Caco-2 (cell line): ENCODE measurements at regions of chr13 and their contacts with region 1.

Region 1: GRCh38 chr13:37510441-37510840 is 88.1 kb downstream of the POSTN start:
- DNase-seq: no peak
- H3K4me3 ChIP-seq: no peak overlapping the region
- H3K4me3 Mint-ChIP-seq: no peak overlapping the region
- H3K27ac Mint-ChIP-seq: no peak overlapping the region
- H3K4me1 ChIP-seq: peaks cover 20% of the 10 kb centered on the region
- H3K4me1 Mint-ChIP-seq: peaks cover 12% of the 10 kb centered on the region
- H3K27me3 ChIP-seq: no peaks in the 10 kb centered on the region
- H3K27me3 Mint-ChIP-seq: no peaks in the 10 kb centered on the region
- CTCF ChIP-seq: no peak

Region 2: GRCh38 chr13:37475966-37476365 is 34.5 kb before region 1 on chr13:
- CTCF ChIA-PET with region 1: no interaction called
- POLR2A ChIA-PET with region 1: no interaction called
- intact Hi-C with region 1: loop called (anchors 1 kb)
- DNase-seq: no peak
- H3K4me3 ChIP-seq: no peak overlapping the region
- H3K4me3 Mint-ChIP-seq: no peak overlapping the region
- H3K27ac Mint-ChIP-seq: no peak overlapping the region
- H3K4me1 ChIP-seq: no peaks in the 10 kb centered on the region; the same call in 1 of the 2 replicates
- H3K4me1 Mint-ChIP-seq: peaks cover 14% of the 10 kb centered on the region
- H3K27me3 ChIP-seq: no peaks in the 10 kb centered on the region
- H3K27me3 Mint-ChIP-seq: peaks cover 3% of the 10 kb centered on the region
- CTCF ChIP-seq: no peak

Region 3: DNA sequence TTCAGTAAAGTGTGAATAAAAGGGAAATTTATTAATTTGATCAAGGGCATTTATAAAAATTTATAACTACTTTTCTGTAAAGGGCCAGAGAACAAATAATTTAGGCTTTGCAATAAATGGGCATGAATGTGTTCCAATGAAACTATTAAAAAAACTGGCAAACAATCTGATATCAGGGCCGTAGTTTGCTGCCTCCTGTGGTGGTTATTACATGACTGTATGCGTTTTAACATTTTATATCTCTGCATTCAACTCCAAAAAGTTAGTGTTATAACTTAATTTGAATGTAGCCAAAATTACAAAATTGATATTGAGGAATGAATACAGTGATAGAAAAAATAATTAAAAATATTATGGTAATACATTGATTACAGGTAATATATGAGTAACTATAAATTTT is 168.6 kb after region 1 on chr13:
- CTCF ChIA-PET with region 1: no interaction called
- POLR2A ChIA-PET with region 1: no interaction called
- intact Hi-C with region 1: no loop called
- DNase-seq: no peak
- H3K4me3 ChIP-seq: no peak overlapping the region
- H3K4me3 Mint-ChIP-seq: no peak overlapping the region
- H3K27ac Mint-ChIP-seq: no peak overlapping the region
- H3K4me1 ChIP-seq: no peaks in the 10 kb centered on the region
- H3K4me1 Mint-ChIP-seq: no peaks in the 10 kb centered on the region
- H3K27me3 ChIP-seq: no peaks in the 10 kb centered on the region
- H3K27me3 Mint-ChIP-seq: peaks cover 8% of the 10 kb centered on the region
- CTCF ChIP-seq: no peak

Region 4: GRCh38 chr13:37837098-37837497 is 326.7 kb after region 1 on chr13:
- CTCF ChIA-PET with region 1: no interaction called
- POLR2A ChIA-PET with region 1: no interaction called
- intact Hi-C with region 1: no loop called
- DNase-seq: no peak
- H3K4me3 ChIP-seq: no peak overlapping the region
- H3K4me3 Mint-ChIP-seq: no peak overlapping the region
- H3K27ac Mint-ChIP-seq: no peak overlapping the region
- H3K4me1 ChIP-seq: no peaks in the 10 kb centered on the region
- H3K4me1 Mint-ChIP-seq: no peaks in the 10 kb centered on the region
- H3K27me3 ChIP-seq: no peaks in the 10 kb centered on the region
- H3K27me3 Mint-ChIP-seq: peaks cover 7% of the 10 kb centered on the region
- CTCF ChIP-seq: no peak

Region 5: DNA sequence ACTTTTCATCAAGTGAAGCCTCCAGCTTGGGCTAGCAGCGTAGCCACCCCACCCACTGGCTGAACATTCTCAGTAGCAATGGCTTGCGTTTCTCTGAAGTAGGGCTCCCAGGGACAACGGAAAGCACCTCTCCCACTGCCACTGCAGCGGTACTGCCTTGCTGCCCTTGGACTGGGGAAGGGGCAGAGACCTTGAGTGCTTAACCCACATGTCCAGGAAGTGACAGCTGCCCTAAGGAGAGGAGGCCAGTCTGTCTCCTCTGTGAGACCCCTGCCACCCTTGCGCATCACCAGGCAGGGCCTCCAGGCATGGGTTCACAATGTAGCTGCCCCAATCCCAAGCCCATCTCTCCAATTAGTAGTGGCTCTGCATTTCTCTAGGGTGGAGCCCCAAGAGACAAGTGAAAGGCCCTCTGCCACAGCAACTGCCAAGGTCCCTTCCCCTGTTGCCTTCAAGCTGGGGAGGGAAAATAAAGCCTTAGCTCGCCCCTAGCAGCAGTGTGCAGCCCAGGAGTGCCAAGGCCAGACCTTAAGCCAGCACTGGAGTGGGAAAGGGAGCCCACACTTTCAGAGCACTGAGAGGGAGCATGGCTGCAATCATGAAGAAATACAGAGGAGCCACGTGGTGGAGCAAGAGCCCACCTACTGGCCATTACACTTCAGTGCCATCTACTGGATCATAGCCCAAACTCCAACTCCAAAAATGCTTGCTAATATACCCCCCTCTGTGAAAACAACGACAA is 535.0 kb after region 1 on chr13:
- CTCF ChIA-PET with region 1: no interaction called
- POLR2A ChIA-PET with region 1: no interaction called
- intact Hi-C with region 1: no loop called
- DNase-seq: peak in 1 of 2 experiments; percentile 47
- H3K4me3 ChIP-seq: no peak overlapping the region
- H3K4me3 Mint-ChIP-seq: no peak overlapping the region
- H3K27ac Mint-ChIP-seq: no peak overlapping the region
- H3K4me1 ChIP-seq: no peaks in the 10 kb centered on the region
- H3K4me1 Mint-ChIP-seq: no peaks in the 10 kb centered on the region
- H3K27me3 ChIP-seq: no peaks in the 10 kb centered on the region
- H3K27me3 Mint-ChIP-seq: no peaks in the 10 kb centered on the region
- CTCF ChIP-seq: peak; percentile 56 to 85